Left ventricle myocardium superior (tissue), 1 donor: ENCODE measurements at regions of chr1 and their contacts with region 1.

Region 1: GRCh38 chr1:6727535-6727934 is 25.9 kb upstream of the DNAJC11 start:
- DNase-seq: peak; percentile 49
- ATAC-seq: peak; percentile 70

Region 2: GRCh38 chr1:6646499-6647148 is 80.9 kb before region 1 on chr1:
- intact Hi-C with region 1: no loop called
- DNase-seq: no peak
- ATAC-seq: peak; percentile 62

Region 3: GRCh38 chr1:6675941-6676340 is 51.6 kb before region 1 on chr1:
- intact Hi-C with region 1: no loop called
- DNase-seq: no peak
- ATAC-seq: no peak

Region 4: DNA sequence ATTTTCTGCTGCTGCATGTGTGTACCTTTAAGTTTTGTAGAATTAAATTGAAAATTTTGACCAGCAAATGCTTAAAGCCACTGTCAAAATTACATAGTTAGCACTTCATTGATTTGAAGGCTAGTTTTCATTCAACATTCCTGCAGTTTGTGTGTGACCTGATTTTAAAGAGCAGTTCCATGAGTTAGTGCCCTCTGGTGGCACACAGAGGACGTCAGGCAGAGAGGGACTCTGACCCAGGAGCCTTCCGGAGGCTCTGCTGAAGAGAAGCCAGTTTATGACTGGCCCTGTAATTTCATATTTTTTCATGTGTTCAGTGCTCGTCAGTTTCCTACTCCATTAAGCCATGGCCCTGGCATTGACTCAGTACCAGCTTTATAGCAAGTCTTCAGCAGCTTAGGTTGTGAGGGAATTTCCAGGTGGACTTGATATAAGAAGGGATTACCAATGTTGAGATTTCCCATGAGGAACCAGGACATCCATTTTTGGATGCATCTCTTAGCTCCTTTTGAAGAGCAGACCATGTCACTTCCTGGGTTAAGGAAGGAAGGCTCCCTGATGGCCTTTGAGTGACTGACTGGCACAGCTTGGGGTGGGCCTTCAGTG is 162.4 kb after region 1 on chr1:
- intact Hi-C with region 1: loop called (anchors 10 kb)
- DNase-seq: peak; percentile 53
- ATAC-seq: peak; percentile 75

Region 5: GRCh38 chr1:6991266-6991665 is 263.7 kb after region 1 on chr1:
- intact Hi-C with region 1: no loop called
- DNase-seq: no peak
- ATAC-seq: no peak

Region 6: DNA sequence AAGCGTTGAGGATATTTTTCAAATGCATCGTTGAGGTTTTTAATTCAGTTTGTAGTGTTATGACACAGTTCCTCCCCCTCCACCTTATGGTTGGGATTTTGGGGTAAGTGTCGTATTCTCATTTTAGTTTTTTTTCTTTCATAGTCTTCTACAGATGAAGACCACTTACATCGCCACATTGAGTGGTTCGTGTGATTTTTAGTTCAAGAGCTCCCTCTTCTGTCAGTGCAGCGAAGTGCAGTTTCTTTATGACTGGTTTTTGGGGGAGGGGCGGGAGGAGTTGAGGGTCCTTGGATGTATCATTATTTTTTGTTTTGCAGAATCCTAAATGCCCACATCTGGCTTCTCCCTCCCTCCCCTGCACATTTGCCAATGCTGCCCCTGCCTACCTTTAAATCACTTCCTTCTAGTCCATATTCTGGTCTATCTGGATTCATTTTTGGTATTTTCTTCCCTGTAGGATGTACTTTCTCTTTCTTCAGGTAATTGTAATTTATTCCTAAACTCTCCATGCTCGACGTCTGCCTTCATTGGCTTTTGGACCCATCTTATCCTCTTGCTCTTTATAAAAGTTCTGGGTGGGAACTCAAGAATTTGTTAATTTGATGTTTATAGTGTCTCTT is 490.8 kb after region 1 on chr1:
- intact Hi-C with region 1: loop called (anchors 10 kb)
- DNase-seq: no peak
- ATAC-seq: no peak

Region 7: GRCh38 chr1:7424352-7424890 is 696.9 kb after region 1 on chr1:
- intact Hi-C with region 1: no loop called
- DNase-seq: no peak
- ATAC-seq: peak; percentile 31